Endothelial cell of umbilical vein (primary cell): ENCODE measurements at regions of chr13 and their contacts with region 1.

Region 1: DNA sequence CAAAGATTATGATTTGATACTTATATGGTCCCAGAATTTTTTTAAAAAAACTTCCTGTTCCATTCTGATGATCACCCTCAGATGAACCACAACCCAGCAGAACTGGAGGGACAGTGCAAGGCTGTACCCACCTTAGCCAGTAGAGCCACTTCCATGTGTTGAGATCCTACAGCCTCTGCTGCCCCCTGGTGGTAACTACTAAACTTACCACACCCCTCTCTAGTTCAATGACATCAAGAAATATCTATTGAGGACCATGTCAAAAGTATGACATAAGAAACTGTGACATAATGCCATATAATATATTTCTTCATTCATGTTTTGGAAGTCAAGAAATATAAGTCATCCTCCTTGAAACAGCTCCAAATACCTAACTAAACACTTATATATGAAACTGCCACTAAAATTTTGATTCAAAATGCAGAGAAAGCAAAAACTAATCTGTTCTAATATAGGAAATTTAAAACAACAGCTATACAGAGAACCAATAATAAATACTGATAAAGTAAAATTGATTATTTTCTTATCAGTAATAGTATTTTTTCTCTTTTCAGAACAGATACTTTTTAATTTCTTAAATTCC is 412.6 kb downstream of the KCTD12 start:
- DNase-seq: peak; percentile 85
- H3K4me3 ChIP-seq: no peak overlapping the region
- H3K27ac ChIP-seq: no peak overlapping the region
- H3K4me1 ChIP-seq: no peaks in the 10 kb centered on the region
- H3K27me3 ChIP-seq: peaks cover 2% of the 10 kb centered on the region in 2 experiments
- CTCF ChIP-seq: peak; percentile 67 to 68
- POLR2A ChIP-seq: no peak

Region 2: GRCh38 chr13:75687150-75687763 is 786.4 kb before region 1 on chr13:
- CTCF ChIA-PET with region 1: interaction called, 5 read pairs
- POLR2A ChIA-PET with region 1: no interaction called
- dilution Hi-C with region 1: no loop called
- intact Hi-C with region 1: loop called (anchors 1 kb)
- DNase-seq: peak; percentile 41
- H3K4me3 ChIP-seq: no peak overlapping the region
- H3K27ac ChIP-seq: no peak overlapping the region
- H3K4me1 ChIP-seq: no peaks in the 10 kb centered on the region
- H3K27me3 ChIP-seq: no peaks in the 10 kb centered on the region
- CTCF ChIP-seq: peak; percentile 35 to 50
- POLR2A ChIP-seq: no peak

Region 3: DNA sequence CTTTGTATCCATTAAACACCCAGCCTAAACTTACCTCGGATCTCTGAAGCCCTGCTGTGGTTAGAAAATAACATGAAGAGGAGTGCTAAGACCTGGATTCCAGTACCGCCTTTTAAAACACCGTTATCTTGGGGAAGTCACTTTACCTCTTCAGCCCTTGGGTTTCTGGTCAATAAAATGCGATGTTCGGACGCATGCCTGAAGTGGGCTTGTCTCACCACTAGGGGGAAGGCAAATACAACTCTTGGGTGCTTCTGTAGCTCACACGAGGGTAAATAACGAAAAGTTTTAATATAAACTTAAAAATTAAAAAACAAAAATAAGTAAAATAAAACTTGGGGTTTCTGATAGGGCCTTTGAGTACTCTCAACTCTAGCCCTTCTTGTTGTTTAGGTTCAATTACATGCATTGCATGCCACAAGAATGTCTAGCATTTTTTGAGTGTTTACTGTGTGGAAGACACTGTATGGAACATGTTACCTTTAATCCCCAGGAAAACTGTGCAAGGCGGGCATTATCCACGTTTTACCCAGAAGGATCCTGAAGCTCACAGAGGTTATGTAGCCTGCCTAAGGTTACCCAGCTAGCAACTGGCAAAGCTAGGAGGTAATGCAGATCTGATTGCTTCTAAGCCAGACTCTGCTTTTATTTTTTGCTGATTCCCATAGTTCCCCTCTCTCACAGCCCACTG is 597.1 kb before region 1 on chr13:
- CTCF ChIA-PET with region 1: interaction called, 76 read pairs
- POLR2A ChIA-PET with region 1: no interaction called
- dilution Hi-C with region 1: no loop called
- intact Hi-C with region 1: loop called (anchors 1 kb)
- DNase-seq: peak; percentile 74
- H3K4me3 ChIP-seq: no peak overlapping the region
- H3K27ac ChIP-seq: no peak overlapping the region
- H3K4me1 ChIP-seq: no peaks in the 10 kb centered on the region
- H3K27me3 ChIP-seq: peaks cover 0 to 2% of the 10 kb centered on the region in 2 experiments
- CTCF ChIP-seq: peak; percentile 76 to 78
- POLR2A ChIP-seq: no peak

Region 4: DNA sequence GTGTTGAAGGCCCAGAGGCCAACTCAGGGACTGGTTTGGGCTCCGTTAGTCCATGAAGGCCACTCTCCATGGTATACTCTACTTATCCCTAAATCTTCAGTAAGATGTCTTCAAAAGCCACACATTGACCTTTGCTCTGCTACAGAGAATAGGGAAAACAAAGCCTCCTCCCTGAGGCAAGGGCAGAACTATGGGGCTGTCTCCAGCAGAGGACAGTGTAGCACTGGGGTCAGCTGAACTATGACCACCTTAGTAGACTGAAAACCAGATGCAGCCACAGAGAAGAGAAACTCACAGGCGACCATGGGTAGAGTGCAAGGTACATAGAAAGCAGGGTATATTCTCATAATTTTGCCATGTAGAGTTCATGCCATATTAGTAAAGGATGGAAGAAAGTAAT is 250.1 kb before region 1 on chr13:
- CTCF ChIA-PET with region 1: no interaction called
- POLR2A ChIA-PET with region 1: no interaction called
- dilution Hi-C with region 1: no loop called
- intact Hi-C with region 1: loop called (anchors 5 kb)
- DNase-seq: no peak
- H3K4me3 ChIP-seq: no peak overlapping the region
- H3K27ac ChIP-seq: no peak overlapping the region
- H3K4me1 ChIP-seq: no peaks in the 10 kb centered on the region
- H3K27me3 ChIP-seq: no peaks in the 10 kb centered on the region
- CTCF ChIP-seq: no peak
- POLR2A ChIP-seq: no peak

Region 5: GRCh38 chr13:76980075-76980718 is 506.6 kb after region 1 on chr13:
- CTCF ChIA-PET with region 1: no interaction called
- POLR2A ChIA-PET with region 1: no interaction called
- dilution Hi-C with region 1: no loop called
- intact Hi-C with region 1: loop called (anchors 10 kb)
- DNase-seq: peak; percentile 52
- H3K4me3 ChIP-seq: no peak overlapping the region
- H3K27ac ChIP-seq: no peak overlapping the region
- H3K4me1 ChIP-seq: peaks cover 2% of the 10 kb centered on the region
- H3K27me3 ChIP-seq: peaks cover 16 to 24% of the 10 kb centered on the region in 2 experiments
- CTCF ChIP-seq: peak; percentile 95 to 100
- POLR2A ChIP-seq: no peak